CD8-positive, alpha-beta T cell (primary cell): ENCODE measurements at regions of chr4 and their contacts with region 1.

Region 1: DNA sequence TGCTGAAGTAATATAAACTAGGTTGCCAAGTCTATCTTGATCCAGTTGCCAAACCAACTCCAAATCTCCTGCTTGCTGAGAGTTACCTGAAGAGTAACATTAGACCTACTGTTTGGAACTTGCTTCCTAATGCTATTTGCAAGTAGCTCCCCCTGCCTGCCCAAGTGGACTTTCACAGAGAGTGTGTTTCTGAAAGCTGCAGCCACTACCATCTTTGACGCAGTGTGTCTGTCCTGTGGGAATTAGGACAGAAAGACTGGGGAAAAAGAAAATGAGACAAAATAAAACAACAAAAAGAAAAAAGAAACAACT is 195.0 kb upstream of the HS3ST1 start:
- DNase-seq: peak in 2 of 9 experiments; percentile 3
- ATAC-seq: no peak
- H3K4me3 ChIP-seq: no peak overlapping the region
- H3K4me3 Mint-ChIP-seq: no peak overlapping the region
- H3K27ac ChIP-seq: no peak overlapping the region
- H3K27ac Mint-ChIP-seq: no peak overlapping the region
- H3K4me1 ChIP-seq: no peaks in the 10 kb centered on the region
- H3K4me1 Mint-ChIP-seq: no peaks in the 10 kb centered on the region
- H3K27me3 ChIP-seq: no peaks in the 10 kb centered on the region
- H3K27me3 Mint-ChIP-seq: no peaks in the 10 kb centered on the region
- CTCF ChIP-seq: no peak

Region 2: GRCh38 chr4:10577018-10577417 is 1046.7 kb before region 1 on chr4:
- CTCF ChIA-PET with region 1: no interaction called
- POLR2A ChIA-PET with region 1: no interaction called
- intact Hi-C with region 1: loop called in 1 of 2 experiments (anchors 10 kb)
- DNase-seq: peak in 1 of 9 experiments; percentile 14
- ATAC-seq: no peak
- H3K4me3 ChIP-seq: no peak overlapping the region
- H3K4me3 Mint-ChIP-seq: no peak overlapping the region
- H3K27ac ChIP-seq: no peak overlapping the region
- H3K27ac Mint-ChIP-seq: no peak overlapping the region
- H3K4me1 ChIP-seq: no peaks in the 10 kb centered on the region
- H3K4me1 Mint-ChIP-seq: no peaks in the 10 kb centered on the region
- H3K27me3 ChIP-seq: no peaks in the 10 kb centered on the region
- H3K27me3 Mint-ChIP-seq: peaks cover 3% of the 10 kb centered on the region
- CTCF ChIP-seq: no peak

Region 3: DNA sequence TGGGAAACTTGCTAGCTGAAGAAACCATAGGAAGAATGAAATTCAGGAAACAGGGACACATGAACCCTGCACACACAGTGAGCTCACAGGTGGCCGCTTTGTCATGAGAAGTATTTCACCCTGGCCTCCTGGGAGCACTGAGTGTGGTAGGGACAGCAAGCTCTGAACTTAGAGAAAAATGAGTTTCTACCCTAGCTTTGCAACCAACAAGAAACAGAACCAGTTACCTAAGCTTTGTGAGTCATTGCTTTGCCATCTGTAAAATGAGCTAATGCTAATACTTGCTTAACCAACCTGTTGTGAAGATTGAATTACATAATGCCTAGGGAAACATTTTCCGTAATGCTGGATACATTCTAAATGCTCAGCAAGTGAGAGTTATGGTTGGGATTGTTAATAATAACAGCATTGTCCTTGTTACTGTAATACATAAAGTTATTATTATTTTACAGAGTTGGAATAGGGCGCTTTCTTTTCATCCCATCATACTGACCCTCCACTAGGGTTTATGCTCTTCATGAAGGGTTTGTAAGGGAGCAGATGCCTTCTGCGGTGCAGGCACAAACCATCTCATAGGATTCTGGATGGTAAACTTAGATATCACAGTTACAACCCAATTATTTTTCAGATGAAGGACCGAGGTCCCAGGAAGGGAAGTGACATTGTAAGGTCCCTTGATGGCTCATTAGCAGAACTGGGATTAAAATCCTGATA is 11.8 kb after region 1 on chr4:
- CTCF ChIA-PET with region 1: no interaction called
- POLR2A ChIA-PET with region 1: no interaction called
- intact Hi-C with region 1: no loop called
- DNase-seq: no peak
- ATAC-seq: no peak
- H3K4me3 ChIP-seq: no peak overlapping the region
- H3K4me3 Mint-ChIP-seq: no peak overlapping the region
- H3K27ac ChIP-seq: no peak overlapping the region
- H3K27ac Mint-ChIP-seq: no peak overlapping the region
- H3K4me1 ChIP-seq: no peaks in the 10 kb centered on the region
- H3K4me1 Mint-ChIP-seq: no peaks in the 10 kb centered on the region
- H3K27me3 ChIP-seq: no peaks in the 10 kb centered on the region
- H3K27me3 Mint-ChIP-seq: no peaks in the 10 kb centered on the region
- CTCF ChIP-seq: no peak

Region 4: DNA sequence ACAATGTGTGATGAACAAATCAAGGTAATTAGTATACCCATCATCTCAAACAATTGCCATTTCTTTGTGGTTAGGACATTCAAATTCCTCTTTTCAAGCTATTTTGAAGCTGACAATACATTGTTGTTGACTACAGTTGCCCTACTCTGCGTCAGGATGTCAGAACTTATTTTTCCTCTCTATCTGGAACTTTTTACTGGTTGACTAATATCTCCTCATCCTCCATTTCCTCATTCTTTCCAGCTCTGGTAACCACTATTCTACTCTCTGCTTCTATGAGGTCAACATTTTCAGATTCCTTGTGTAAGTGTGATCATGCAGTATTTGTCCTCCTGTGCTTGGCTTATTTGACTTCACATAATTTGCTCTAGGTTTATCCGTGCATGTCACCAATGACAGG is 45.5 kb after region 1 on chr4:
- CTCF ChIA-PET with region 1: no interaction called
- POLR2A ChIA-PET with region 1: no interaction called
- intact Hi-C with region 1: loop called in 1 of 2 experiments (anchors 1 kb)
- DNase-seq: no peak
- ATAC-seq: no peak
- H3K4me3 ChIP-seq: no peak overlapping the region
- H3K4me3 Mint-ChIP-seq: no peak overlapping the region
- H3K27ac ChIP-seq: no peak overlapping the region
- H3K27ac Mint-ChIP-seq: no peak overlapping the region
- H3K4me1 ChIP-seq: no peaks in the 10 kb centered on the region
- H3K4me1 Mint-ChIP-seq: no peaks in the 10 kb centered on the region
- H3K27me3 ChIP-seq: no peaks in the 10 kb centered on the region
- H3K27me3 Mint-ChIP-seq: no peaks in the 10 kb centered on the region
- CTCF ChIP-seq: no peak